ENCODE measurements at regions of chr4 and their contacts with region 1.

Region 1: GRCh38 chr4:181143250-181143854 is 1099.8 kb upstream of the TENM3 start:
- DNase-seq: peak in 1 of 2 experiments; percentile 53
- H3K4me3 ChIP-seq: no peak overlapping the region
- H3K27ac ChIP-seq: no peak overlapping the region
- H3K4me1 ChIP-seq: no peaks in the 10 kb centered on the region
- H3K27me3 ChIP-seq: no peaks in the 10 kb centered on the region
- CTCF ChIP-seq: peak; percentile 88

Region 2: DNA sequence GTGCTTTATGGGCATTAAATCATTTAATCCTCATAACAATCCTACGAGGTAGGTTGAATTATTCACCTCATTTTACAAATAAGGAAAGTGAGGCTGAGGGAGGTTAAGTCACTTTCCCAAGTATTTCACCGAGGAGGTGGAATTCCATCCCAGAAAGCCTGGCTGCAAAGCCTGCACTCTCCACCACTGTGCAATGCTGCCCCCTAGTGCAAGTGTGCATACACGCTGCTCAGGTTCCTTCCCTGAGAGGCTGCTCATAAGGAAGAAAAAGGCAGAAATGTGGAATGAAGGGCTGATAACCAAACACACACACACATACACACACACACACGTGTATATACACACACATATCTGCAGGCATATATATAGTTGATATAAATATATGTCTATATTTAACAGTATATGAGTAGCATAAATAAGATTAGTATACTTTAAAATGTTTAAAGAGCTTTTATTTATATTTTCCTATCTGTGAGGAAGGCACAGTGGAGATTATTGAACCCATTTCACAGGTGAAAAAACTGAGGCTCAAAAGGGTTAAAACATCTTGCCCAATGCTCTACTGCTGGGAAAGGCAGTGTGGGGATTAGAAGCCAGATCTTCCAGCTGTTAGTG is 385.3 kb after region 1 on chr4:
- CTCF ChIA-PET with region 1: no interaction called
- POLR2A ChIA-PET with region 1: no interaction called
- intact Hi-C with region 1: loop called (anchors 1 kb)
- DNase-seq: peak; percentile 40 to 50
- H3K4me3 ChIP-seq: no peak overlapping the region
- H3K27ac ChIP-seq: no peak overlapping the region
- H3K4me1 ChIP-seq: no peaks in the 10 kb centered on the region
- H3K27me3 ChIP-seq: no peaks in the 10 kb centered on the region
- CTCF ChIP-seq: peak; percentile 81

Region 3: GRCh38 chr4:182179105-182179504 is 1035.8 kb after region 1 on chr4:
- CTCF ChIA-PET with region 1: no interaction called
- POLR2A ChIA-PET with region 1: no interaction called
- intact Hi-C with region 1: no loop called
- DNase-seq: no peak
- H3K4me3 ChIP-seq: no peak overlapping the region
- H3K27ac ChIP-seq: no peak overlapping the region
- H3K4me1 ChIP-seq: no peaks in the 10 kb centered on the region
- H3K27me3 ChIP-seq: no peaks in the 10 kb centered on the region
- CTCF ChIP-seq: no peak

Region 4: DNA sequence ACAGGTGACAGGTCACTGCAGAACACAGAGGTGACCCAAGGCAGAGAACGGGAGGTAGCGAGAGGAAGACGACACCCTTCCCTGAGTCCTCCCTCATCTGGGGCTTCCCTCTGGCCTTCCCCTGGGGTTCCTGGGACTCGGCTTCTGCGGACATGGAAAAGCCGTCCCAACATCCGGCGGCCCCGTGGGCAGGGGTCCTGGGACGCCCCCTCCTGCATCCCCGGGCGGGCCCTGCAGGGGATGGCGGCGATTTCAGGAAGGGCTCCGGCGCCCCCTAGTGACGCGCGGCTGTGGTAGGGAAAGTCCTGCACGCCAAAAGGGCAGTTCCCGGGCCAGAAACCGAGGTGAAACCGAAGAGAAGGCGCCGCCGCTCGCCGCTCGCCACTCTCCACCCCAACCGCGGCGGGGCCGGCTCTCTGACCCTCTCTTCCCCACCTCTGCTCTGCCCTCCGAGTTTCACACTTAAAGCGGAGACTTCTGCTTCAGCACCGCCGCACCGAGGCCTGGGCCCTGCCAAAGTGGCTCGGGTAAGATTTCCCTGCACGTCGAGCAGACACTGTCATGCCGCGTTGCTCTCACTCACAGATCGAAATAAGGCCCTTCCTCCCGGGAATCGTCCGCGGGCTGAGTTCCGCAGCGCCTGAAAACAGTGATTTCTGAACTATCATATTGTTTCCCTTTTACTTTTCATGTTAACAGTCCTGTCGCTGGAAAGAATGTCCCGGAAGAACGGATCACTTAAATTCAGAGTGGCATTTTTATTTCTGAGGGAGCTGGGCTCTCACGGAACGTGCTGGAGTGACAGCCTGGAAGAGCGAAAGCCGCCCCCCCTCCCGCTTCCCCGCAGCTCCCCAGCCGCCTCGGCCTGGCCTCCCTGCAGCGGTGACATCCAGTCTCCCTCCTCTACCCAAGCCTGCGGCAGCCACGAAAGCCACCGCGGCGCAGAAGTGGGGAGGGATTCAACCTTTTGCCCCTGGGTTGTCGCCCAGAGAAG is 1663.2 kb after region 1 on chr4:
- CTCF ChIA-PET with region 1: no interaction called
- POLR2A ChIA-PET with region 1: no interaction called
- intact Hi-C with region 1: loop called (anchors 10 kb)
- DNase-seq: peak in 1 of 2 experiments; percentile 43
- H3K4me3 ChIP-seq: no peak overlapping the region
- H3K27ac ChIP-seq: no peak overlapping the region
- H3K4me1 ChIP-seq: no peaks in the 10 kb centered on the region
- H3K27me3 ChIP-seq: peaks cover 26% of the 10 kb centered on the region
- CTCF ChIP-seq: peak; percentile 73

Region 5: DNA sequence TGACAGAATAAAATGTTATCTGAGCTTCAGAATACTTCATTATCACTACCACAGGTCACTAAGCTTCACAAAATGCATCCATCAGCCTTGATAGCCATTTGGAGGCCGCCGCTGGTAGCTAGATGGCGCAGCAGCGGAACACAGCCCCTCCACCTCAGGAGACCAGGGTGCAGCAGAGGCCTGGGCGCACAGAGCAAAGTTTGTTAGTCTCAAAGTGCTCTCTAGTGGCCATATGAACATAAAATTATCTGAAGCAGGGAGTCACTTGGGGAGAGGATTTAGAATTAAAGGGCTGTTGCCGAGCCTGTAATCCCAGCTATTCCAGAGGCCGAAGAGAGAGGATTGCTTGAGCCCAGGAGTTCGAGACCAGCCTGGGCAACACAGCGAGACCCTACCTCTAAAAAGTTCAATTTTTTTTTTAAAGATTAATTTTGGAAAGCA is 1782.0 kb after region 1 on chr4:
- CTCF ChIA-PET with region 1: no interaction called
- POLR2A ChIA-PET with region 1: no interaction called
- intact Hi-C with region 1: loop called (anchors 10 kb)
- DNase-seq: peak; percentile 52 to 59
- H3K4me3 ChIP-seq: no peak overlapping the region
- H3K27ac ChIP-seq: no peak overlapping the region
- H3K4me1 ChIP-seq: no peaks in the 10 kb centered on the region
- H3K27me3 ChIP-seq: 0 out of 2 replicates have a peak, but pooled peaks cover 3% of the 10 kb centered on the region
- CTCF ChIP-seq: peak; percentile 61; the same call in 1 of the 2 replicates